RWPE1 (cell line): ENCODE measurements at regions of chr12 and their contacts with region 1.

Region 1: DNA sequence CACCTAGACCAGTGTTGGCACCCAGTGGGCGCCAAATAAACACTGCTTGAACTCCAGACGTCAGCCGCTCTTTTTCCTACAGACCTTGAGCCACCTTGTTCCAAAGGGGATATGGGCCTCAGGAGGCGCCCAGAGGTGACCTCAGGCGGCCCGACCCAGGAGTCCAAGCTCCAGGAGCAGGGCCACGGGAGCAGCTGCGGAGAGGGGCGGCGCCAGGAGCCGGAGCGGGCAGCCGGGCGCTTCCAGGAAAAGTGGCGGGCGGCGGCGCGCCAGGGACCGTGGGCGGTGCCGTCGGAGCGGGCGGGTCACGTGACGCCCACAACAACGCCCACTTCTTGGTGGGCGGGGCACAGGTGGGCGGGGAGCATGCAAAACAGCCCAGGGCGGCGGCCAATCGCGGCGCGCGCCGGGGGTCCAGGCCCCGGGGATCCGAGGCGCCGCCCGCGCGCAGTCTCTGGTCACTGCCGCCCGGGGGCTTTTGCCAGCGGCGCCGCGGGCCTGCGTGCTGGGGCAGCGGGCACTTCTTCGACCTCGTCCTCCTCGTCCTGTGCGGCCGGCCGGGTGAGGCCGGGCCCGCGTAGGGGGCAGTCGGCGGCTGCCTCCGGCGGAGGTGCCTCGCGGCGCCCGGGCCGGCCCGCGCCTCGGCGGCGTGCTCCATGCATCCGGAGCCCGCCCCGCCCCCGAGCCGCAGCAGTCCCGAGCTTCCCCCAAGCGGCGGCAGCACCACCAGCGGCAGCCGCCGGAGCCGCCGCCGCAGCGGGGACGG is at the start of gene ORAI1:
- DNase-seq: peak; percentile 95
- H3K27ac ChIP-seq: peak within 1 kb of the TSS; percentile 89
- CTCF ChIP-seq: no peak

Region 2: DNA sequence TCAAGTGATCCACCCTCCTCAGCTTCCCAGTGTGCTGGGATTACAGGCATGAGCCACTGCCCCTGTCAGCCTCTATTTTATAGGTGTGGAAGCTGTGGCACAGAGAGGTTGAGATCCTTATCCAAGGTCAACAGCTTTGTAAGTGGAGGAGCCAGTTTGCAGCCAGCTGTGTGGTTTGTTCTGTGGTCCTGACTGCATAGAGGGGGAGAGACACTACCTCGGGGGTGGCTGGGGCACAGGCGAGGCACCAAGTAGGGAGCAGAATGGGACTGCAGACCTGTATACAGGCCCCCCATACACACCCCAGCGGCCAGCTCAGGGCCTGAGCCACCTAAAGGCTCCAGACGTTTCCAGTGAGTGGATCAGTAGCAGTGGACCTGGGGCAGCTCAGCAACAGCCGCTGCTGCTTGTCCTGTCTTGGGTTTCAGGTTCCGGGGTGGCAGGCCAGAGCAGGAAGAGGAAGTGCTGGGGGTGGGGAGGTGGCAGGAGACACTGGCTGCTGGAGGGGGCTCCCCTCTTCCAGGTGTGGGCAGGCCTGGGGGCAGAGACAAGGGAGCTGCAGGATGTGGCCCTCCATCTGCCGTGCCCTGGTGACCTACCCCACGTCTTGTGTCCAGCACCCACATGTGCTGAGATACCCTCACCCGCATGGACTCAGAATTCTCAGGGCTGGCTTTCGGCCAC is 11.1 kb after region 1 on chr12:
- CTCF ChIA-PET with region 1: interaction called, 11 read pairs
- POLR2A ChIA-PET with region 1: no interaction called
- DNase-seq: no peak
- H3K27ac ChIP-seq: peak overlapping the region; percentile 43
- CTCF ChIP-seq: no peak